CD8-positive, alpha-beta T cell (primary cell): ENCODE measurements at regions of chr1 and their contacts with region 1.

Region 1: DNA sequence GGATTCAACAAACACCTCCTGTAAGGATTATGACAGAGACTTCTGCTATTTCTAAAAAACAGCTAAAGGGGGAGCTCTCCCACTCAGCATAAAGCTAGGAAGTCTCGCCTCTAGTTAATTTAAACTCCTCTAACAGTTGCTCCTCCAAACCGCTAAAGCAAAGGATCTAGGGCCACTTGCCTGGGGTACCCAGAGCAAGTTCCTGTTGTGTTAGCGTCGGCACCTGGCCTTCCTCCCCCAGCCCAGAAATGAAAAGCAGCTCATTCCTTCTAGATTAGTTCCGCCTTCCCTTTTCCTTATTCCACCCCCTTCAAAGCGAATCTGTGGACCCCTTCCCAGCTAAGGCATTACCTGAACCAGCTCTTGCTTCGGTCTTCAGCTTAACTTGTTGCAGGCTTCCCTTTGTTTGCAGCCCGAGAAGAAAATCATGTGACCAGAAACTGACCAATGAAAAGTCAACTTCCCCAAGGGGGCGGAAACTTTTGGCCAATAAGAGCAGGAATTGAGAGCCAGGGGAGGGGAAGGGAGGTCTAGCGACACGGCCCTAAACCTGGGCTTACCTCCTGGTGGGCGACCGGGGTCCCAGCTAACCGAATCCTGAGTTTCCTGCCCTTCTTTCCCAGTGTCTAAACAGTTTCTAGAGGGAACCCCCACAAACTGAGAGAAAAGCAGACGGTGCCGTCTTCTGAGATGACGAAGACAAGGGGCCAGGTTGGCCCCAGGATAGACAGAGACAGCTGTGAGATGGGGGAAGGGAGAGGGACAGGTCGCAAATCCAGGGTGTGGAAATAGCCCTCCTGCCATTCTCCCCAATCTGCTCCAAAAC is at the start of gene PBXIP1:
- DNase-seq: peak; percentile 65 to 96 (median 84)
- ATAC-seq: peak; percentile 40
- H3K4me3 ChIP-seq: peak within 1 kb of the TSS; percentile 71 to 76
- H3K4me3 Mint-ChIP-seq: peak within 1 kb of the TSS; percentile 99
- H3K27ac ChIP-seq: peak within 1 kb of the TSS; percentile 98
- H3K27ac Mint-ChIP-seq: peak within 1 kb of the TSS; percentile 99
- H3K4me1 ChIP-seq: peaks cover 60% of the 10 kb centered on the region
- H3K4me1 Mint-ChIP-seq: peaks cover 76% of the 10 kb centered on the region
- H3K27me3 ChIP-seq: no peaks in the 10 kb centered on the region
- H3K27me3 Mint-ChIP-seq: no peaks in the 10 kb centered on the region
- CTCF ChIP-seq: no peak
- total RNA-seq, gene PBXIP1: 315 to 319 TPM

Region 2: GRCh38 chr1:154796303-154796892 is 159.5 kb before region 1 on chr1:
- CTCF ChIA-PET with region 1: no interaction called
- POLR2A ChIA-PET with region 1: no interaction called
- intact Hi-C with region 1: no loop called
- DNase-seq: no peak
- ATAC-seq: no peak
- H3K4me3 ChIP-seq: no peak overlapping the region
- H3K4me3 Mint-ChIP-seq: no peak overlapping the region
- H3K27ac ChIP-seq: no peak overlapping the region
- H3K27ac Mint-ChIP-seq: no peak overlapping the region
- H3K4me1 ChIP-seq: peaks cover 16% of the 10 kb centered on the region
- H3K4me1 Mint-ChIP-seq: peaks cover 24% of the 10 kb centered on the region
- H3K27me3 ChIP-seq: peaks cover 0 to 2% of the 10 kb centered on the region in 2 experiments
- H3K27me3 Mint-ChIP-seq: no peaks in the 10 kb centered on the region
- CTCF ChIP-seq: no peak

Region 3: DNA sequence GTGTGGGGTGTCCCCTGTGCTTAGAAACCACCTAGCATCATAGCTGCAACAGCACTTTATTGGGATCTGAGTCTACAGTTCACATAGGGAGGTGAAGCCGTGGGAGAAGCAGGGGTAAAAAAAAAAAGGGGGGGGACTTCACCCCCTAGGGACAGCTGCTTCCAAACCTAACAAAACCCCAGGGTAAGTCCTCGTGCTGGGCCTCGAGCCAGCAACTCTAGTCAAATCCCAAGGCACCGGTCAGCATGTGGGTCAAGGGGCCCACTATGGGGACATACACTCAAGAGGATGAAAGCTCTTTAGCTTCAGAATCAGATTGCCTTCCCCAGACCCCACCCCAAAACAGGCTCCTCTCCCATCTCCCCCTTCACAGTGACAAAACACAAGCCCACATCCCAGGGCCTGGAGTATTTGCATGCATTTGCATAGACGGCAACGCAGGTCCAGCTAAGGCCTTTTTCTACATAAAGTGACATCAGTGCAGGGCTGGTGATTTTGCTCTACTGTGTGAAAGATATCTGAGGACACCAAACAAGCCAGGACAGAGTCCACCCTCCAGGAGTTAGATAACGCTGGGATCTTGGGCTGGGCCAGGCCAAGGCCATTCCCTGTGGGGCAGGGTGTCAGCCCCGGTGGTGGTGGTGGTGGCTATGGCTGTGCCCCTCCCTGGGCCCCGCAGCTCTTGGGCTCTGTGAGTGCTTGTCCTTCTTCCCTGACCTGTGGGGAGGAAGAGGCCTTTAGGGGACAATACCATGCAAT is 11.4 kb before region 1 on chr1:
- CTCF ChIA-PET with region 1: interaction called, 9 read pairs
- POLR2A ChIA-PET with region 1: interaction called, 12 read pairs
- intact Hi-C with region 1: no loop called
- DNase-seq: peak in 1 of 9 experiments; percentile 24
- ATAC-seq: no peak
- H3K4me3 ChIP-seq: no peak overlapping the region
- H3K4me3 Mint-ChIP-seq: no peak overlapping the region
- H3K27ac ChIP-seq: no peak overlapping the region
- H3K27ac Mint-ChIP-seq: peak overlapping the region; percentile 85
- H3K4me1 ChIP-seq: peaks cover 35% of the 10 kb centered on the region
- H3K4me1 Mint-ChIP-seq: peaks cover 49% of the 10 kb centered on the region
- H3K27me3 ChIP-seq: no peaks in the 10 kb centered on the region
- H3K27me3 Mint-ChIP-seq: no peaks in the 10 kb centered on the region
- CTCF ChIP-seq: no peak

Region 4: GRCh38 chr1:154974063-154974807 is 18.3 kb after region 1 on chr1 and contains the start of gene CKS1B:
- CTCF ChIA-PET with region 1: interaction called, 17 read pairs
- POLR2A ChIA-PET with region 1: interaction called, 15 read pairs
- intact Hi-C with region 1: loop called (anchors 1 kb)
- DNase-seq: peak; percentile 92 to 99 (median 97)
- ATAC-seq: peak; percentile 86
- H3K4me3 ChIP-seq: peak within 1 kb of the TSS; percentile 67
- H3K4me3 Mint-ChIP-seq: no peak within 1 kb of the TSS
- H3K27ac ChIP-seq: peak within 1 kb of the TSS; percentile 90 to 95
- H3K27ac Mint-ChIP-seq: no peak within 1 kb of the TSS
- H3K4me1 ChIP-seq: peaks cover 23% of the 10 kb centered on the region
- H3K4me1 Mint-ChIP-seq: peaks cover 26% of the 10 kb centered on the region
- H3K27me3 ChIP-seq: no peaks in the 10 kb centered on the region
- H3K27me3 Mint-ChIP-seq: no peaks in the 10 kb centered on the region
- CTCF ChIP-seq: no peak
- total RNA-seq, gene CKS1B: 2.3 to 2.9 TPM

Region 5: DNA sequence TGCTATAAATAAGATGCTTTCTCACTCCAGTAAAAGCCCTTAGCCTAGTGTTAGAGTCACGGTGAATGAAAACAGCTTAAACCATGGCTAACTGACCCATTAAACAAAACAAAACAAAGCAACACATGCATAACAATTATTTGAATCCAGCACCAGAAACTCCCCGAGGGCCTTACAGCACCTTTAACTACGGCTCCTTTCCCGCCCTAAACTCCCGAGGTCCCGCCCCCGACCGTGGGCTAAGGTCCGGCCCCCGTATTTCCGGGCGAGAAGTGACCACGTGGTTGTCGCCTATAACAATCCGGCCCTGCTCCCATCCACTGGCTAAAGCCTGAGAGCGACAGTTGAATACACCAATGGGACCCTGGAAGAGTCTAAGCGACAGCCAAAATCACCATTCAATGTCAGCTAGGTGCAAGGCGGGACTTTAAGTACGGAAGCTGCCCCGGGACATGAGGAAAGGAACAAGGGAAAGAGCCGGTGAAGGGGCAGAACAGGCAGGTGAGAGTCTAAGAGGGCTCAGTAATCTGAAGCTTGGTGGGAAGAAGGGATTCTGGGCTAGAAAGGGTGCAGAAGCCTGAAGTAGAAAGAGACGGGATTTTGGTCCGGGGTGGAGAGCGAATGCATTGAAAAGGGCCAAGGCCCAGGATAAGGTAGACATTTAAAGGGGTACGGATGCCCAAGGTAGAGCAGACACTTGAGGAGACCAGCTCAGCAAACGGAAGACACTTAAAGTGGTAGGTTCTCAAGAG is 27.1 kb after region 1 on chr1 and contains the start of gene FLAD1:
- CTCF ChIA-PET with region 1: interaction called, 6 read pairs
- POLR2A ChIA-PET with region 1: interaction called, 15 read pairs
- intact Hi-C with region 1: loop called in 1 of 2 experiments (anchors 1 kb)
- DNase-seq: peak; percentile 86 to 99 (median 94)
- ATAC-seq: peak; percentile 98
- H3K4me3 ChIP-seq: peak within 1 kb of the TSS; percentile 57 to 86
- H3K4me3 Mint-ChIP-seq: no peak within 1 kb of the TSS
- H3K27ac ChIP-seq: peak within 1 kb of the TSS; percentile 51 to 82
- H3K27ac Mint-ChIP-seq: no peak within 1 kb of the TSS
- H3K4me1 ChIP-seq: peaks cover 12% of the 10 kb centered on the region
- H3K4me1 Mint-ChIP-seq: peaks cover 12% of the 10 kb centered on the region
- H3K27me3 ChIP-seq: no peaks in the 10 kb centered on the region
- H3K27me3 Mint-ChIP-seq: no peaks in the 10 kb centered on the region
- CTCF ChIP-seq: no peak
- total RNA-seq, gene FLAD1: 17.4 to 19.0 TPM